Dendritic cell treated with granulocyte-macrophage colony-stimulating factor and Interleukin-4, amounts not matched to agents 40 ng/mL and 50 ng/mL, for 4 days (primary cell): ENCODE measurements at regions of chr7 and their contacts with region 1.

Region 1: DNA sequence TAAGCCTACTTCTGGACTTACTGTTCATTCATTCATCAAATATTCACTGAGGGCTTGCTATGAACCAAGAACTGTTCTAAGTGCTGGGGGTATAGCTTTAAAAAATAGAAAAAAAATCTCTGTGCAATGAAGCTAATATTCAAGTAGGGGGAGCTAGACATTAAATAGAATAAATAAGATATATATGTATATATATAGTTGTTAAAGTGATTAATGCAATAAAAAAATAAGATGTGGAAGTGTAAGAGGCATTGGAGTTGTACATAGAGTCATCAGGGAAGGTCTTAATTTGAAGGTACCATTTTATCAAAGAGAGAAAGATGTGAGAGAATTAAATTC is 181.2 kb upstream of the AGR3 start:
- H3K4me3 Mint-ChIP-seq: no peak overlapping the region
- H3K27ac Mint-ChIP-seq: no peak overlapping the region
- H3K4me1 Mint-ChIP-seq: peaks cover 18% of the 10 kb centered on the region
- H3K27me3 Mint-ChIP-seq: no peaks in the 10 kb centered on the region

Region 2: GRCh38 chr7:17009007-17009719 is 53.9 kb before region 1 on chr7:
- intact Hi-C with region 1: loop called (anchors 5 kb)
- H3K4me3 Mint-ChIP-seq: peak overlapping the region; percentile 9
- H3K27ac Mint-ChIP-seq: peak overlapping the region; percentile 75
- H3K4me1 Mint-ChIP-seq: peaks cover 67% of the 10 kb centered on the region
- H3K27me3 Mint-ChIP-seq: no peaks in the 10 kb centered on the region

Region 3: DNA sequence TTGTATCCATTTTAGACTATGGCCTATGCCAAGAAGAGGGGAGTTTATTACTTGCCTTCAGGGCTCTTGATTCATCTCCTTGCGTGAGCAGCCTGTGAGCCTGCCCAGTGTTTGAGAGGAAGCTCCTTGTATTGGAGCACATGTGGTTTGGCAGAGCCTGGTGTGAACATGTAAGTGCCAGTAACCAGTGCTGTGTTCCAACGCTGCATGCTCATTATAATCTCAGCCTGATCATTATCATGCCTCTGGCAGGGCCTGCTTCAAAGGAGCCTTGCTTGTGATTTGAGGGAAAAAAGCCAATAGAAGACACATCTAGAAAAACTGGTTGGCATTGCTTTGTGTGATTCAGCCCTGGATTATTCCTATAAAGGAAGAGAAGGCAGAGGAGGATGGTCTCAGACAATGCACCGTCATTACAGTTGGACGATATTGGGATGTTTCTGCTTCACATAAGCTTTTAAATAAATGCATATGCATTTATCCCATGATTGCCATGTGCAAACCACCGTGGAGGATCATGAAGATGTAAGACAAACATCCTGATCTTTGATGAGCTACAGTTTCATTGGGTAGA is 32.1 kb after region 1 on chr7:
- intact Hi-C with region 1: no loop called
- H3K4me3 Mint-ChIP-seq: no peak overlapping the region
- H3K27ac Mint-ChIP-seq: no peak overlapping the region
- H3K4me1 Mint-ChIP-seq: peaks cover 23% of the 10 kb centered on the region
- H3K27me3 Mint-ChIP-seq: no peaks in the 10 kb centered on the region

Region 4: GRCh38 chr7:17109017-17109416 is 46.0 kb after region 1 on chr7:
- intact Hi-C with region 1: no loop called
- H3K4me3 Mint-ChIP-seq: no peak overlapping the region
- H3K27ac Mint-ChIP-seq: no peak overlapping the region
- H3K4me1 Mint-ChIP-seq: no peaks in the 10 kb centered on the region
- H3K27me3 Mint-ChIP-seq: no peaks in the 10 kb centered on the region